Naive thymus-derived CD4-positive, alpha-beta T cell (primary cell): ENCODE measurements at regions of chr14 and their contacts with region 1.

Region 1: DNA sequence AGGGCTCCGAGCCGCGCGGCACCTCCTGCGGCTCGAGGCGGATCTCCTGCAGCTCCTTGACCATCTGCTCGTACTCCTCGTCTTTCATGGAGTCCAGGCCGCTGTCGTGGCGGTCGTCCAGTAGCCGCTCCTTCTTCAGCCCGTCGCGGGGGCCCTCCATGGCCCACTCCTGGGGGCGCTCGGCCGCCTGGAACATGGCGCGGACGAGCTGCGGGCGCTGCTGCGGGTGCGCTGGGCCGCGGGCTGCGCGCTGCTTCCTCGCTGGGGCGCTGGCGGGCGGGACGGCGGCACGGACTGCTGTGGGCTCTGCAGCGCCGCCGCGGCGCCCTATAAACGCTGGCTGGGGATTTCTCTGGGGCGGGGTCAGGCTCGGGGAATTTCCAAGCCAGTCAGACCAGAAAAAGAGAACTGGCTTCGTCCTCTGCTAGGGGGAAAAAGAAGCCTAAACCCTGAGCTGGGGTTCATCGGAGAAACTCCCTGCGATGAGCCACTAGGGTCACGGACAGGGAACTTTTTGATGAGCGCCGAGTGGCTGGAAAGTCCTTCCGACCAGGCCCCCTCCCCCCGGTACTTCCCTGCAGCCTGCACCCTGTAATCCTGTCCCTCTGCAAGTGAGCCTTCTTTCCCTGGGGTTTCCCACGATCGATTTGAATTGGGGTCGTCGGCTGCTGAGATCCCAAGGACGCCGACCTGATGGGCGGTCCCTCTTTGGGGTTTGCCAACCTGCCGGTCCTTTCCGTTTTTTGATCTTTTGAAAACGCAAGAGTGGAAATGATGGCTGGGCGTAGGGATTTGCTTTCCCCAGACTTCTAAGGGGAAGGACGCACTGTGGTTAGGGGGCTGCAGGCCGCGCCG is at the start of gene NFKBIA:
- DNase-seq: peak; percentile 91 to 99 (median 93)
- ATAC-seq: peak; percentile 79
- H3K4me3 ChIP-seq: peak within 1 kb of the TSS; percentile 85
- H3K4me3 Mint-ChIP-seq: peak within 1 kb of the TSS; percentile 92 to 97 (median 94)
- H3K27ac ChIP-seq: peak within 1 kb of the TSS; percentile 96
- H3K27ac Mint-ChIP-seq: peak within 1 kb of the TSS; percentile 96 to 99 (median 98)
- H3K4me1 ChIP-seq: peaks cover 42 to 43% of the 10 kb centered on the region in 2 donors
- H3K4me1 Mint-ChIP-seq: peaks cover 28 to 63% (median 53%) of the 10 kb centered on the region in 7 donors
- H3K27me3 ChIP-seq: no peaks in the 10 kb centered on the region
- H3K27me3 Mint-ChIP-seq: peaks cover 0 to 2% (median 0%) of the 10 kb centered on the region in 5 donors
- total RNA-seq, gene NFKBIA: 144 to 1,533 (median 246) TPM

Region 2: DNA sequence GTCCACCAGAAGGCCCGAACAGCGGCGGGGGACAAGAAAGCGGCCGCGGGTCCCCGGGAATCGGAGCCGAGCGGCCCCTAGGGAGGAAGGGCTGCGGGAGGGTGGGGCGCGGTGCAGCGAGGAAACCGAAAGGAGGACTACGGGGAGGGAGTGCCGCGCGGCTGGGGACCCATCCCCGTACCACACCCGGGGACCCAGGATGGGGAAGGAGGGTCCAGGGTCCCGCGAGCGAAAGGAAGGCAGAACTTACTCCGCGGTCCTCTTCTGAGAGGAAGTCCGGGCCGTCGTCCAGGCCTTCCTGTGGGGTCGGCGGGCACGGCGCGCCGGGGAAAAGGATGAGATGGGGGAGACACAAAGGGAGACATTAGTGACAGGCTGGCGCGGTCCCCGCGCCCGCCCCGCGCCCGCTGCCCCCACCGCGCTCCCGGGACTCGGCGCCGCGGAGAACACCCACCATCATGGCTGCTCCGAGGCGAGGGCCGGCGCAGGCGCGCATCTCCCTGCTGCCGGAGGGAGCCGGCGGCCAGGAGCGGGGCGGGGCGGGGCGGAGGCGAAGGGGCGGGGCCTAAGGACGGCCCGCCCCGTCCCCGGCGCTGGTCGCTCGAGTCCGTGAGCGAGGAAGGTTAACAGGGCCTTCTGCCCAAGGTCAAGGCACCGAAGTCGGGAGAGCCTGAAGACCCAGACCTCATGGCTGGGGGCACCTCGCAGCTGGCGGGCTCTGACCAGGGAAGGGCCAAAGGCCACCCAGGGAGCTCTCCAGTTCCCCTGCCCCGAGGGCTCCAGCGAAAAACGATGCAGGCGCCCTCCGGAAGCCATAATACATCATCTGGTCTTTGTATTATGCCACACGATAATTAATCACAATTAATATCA is 774.8 kb before region 1 on chr14 and contains the start of gene SNX6:
- CTCF ChIA-PET with region 1: no interaction called
- POLR2A ChIA-PET with region 1: interaction called, 6 read pairs
- intact Hi-C with region 1: loop called (anchors 1 to 5 kb)
- DNase-seq: peak; percentile 75 to 87 (median 83)
- ATAC-seq: peak; percentile 100
- H3K4me3 ChIP-seq: peak within 1 kb of the TSS; percentile 72
- H3K4me3 Mint-ChIP-seq: peak within 1 kb of the TSS; percentile 89 to 100 (median 98)
- H3K27ac ChIP-seq: peak within 1 kb of the TSS; percentile 98
- H3K27ac Mint-ChIP-seq: peak within 1 kb of the TSS; percentile 92 to 97 (median 96)
- H3K4me1 ChIP-seq: peaks cover 17 to 20% of the 10 kb centered on the region in 2 donors
- H3K4me1 Mint-ChIP-seq: peaks cover 6 to 49% (median 33%) of the 10 kb centered on the region in 7 donors
- H3K27me3 ChIP-seq: no peaks in the 10 kb centered on the region
- H3K27me3 Mint-ChIP-seq: peaks cover 0 to 18% (median 0%) of the 10 kb centered on the region in 5 donors
- total RNA-seq, gene SNX6: 56.6 to 78.9 (median 59.7) TPM

Region 3: DNA sequence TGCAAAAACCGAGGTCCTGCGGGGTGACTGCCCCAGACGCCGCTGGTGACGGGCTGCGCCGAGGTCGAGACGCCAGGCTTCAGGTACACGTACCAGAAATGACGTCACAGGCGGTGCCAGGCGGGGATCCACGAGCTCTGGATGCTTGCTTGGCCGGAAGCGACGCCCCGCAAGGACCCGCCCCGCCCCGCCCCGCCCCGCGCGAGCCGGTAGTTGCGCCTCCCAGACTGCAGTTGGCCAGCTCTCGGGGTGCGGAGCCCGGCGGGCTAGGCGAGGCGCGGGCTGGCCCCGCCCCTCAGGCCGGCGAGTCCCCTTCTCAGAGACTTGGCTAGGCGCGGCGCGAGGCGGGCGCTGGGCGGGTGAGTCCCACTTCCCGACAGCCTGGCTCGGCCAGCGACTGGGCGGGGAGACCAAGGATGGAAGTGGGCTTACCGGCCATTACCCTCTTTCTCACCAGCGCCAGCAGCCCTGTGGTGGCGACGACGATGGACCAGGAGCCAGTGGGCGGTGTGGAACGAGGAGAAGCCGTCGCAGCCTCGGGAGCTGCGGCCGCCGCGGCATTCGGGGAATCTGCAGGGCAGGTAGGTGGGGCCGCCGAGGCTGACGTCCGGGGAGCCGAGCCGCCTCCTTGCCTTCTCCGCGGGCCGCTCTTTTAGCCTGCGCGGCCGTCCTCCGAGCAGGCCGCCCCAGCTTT is 358.5 kb before region 1 on chr14 and contains the start of gene FAM177A1:
- CTCF ChIA-PET with region 1: no interaction called
- POLR2A ChIA-PET with region 1: interaction called, 29 read pairs
- intact Hi-C with region 1: loop called (anchors 1 kb)
- DNase-seq: peak; percentile 89 to 100 (median 98)
- ATAC-seq: peak; percentile 94
- H3K4me3 ChIP-seq: peak within 1 kb of the TSS; percentile 80
- H3K4me3 Mint-ChIP-seq: peak within 1 kb of the TSS; percentile 88 to 99 (median 93)
- H3K27ac ChIP-seq: peak within 1 kb of the TSS; percentile 99
- H3K27ac Mint-ChIP-seq: peak within 1 kb of the TSS; percentile 96 to 100 (median 99)
- H3K4me1 ChIP-seq: peaks cover 11 to 19% of the 10 kb centered on the region in 2 donors
- H3K4me1 Mint-ChIP-seq: peaks cover 13 to 39% (median 34%) of the 10 kb centered on the region in 7 donors
- H3K27me3 ChIP-seq: no peaks in the 10 kb centered on the region
- H3K27me3 Mint-ChIP-seq: no peaks in the 10 kb centered on the region
- total RNA-seq, gene FAM177A1: 34.3 to 135 (median 41.7) TPM

Region 4: GRCh38 chr14:35229495-35230089 is 175.1 kb before region 1 on chr14:
- CTCF ChIA-PET with region 1: interaction called, 22 read pairs
- POLR2A ChIA-PET with region 1: interaction called, 35 read pairs
- intact Hi-C with region 1: loop called (anchors 1 kb)
- DNase-seq: peak in 6 of 9 donors; percentile 3 to 41 (median 30)
- ATAC-seq: peak; percentile 61
- H3K4me3 ChIP-seq: no peak overlapping the region
- H3K4me3 Mint-ChIP-seq: no peak overlapping the region
- H3K27ac ChIP-seq: no peak overlapping the region
- H3K27ac Mint-ChIP-seq: peak overlapping the region in 1 of 9 donors; percentile 72
- H3K4me1 ChIP-seq: no peaks in the 10 kb centered on the region
- H3K4me1 Mint-ChIP-seq: peaks cover 6 to 27% (median 16%) of the 10 kb centered on the region in 7 donors
- H3K27me3 ChIP-seq: no peaks in the 10 kb centered on the region
- H3K27me3 Mint-ChIP-seq: no peaks in the 10 kb centered on the region

Region 5: GRCh38 chr14:35301735-35302528 is 102.7 kb before region 1 on chr14:
- CTCF ChIA-PET with region 1: interaction called, 5 read pairs
- POLR2A ChIA-PET with region 1: interaction called, 16 read pairs
- intact Hi-C with region 1: no loop called
- DNase-seq: no peak
- ATAC-seq: no peak
- H3K4me3 ChIP-seq: no peak overlapping the region
- H3K4me3 Mint-ChIP-seq: peak overlapping the region; percentile 35 to 66 (median 48)
- H3K27ac ChIP-seq: peak overlapping the region; percentile 33
- H3K27ac Mint-ChIP-seq: peak overlapping the region; percentile 32 to 86 (median 72)
- H3K4me1 ChIP-seq: peaks cover 26 to 32% of the 10 kb centered on the region in 2 donors
- H3K4me1 Mint-ChIP-seq: peaks cover 51 to 66% (median 52%) of the 10 kb centered on the region in 7 donors
- H3K27me3 ChIP-seq: no peaks in the 10 kb centered on the region
- H3K27me3 Mint-ChIP-seq: no peaks in the 10 kb centered on the region

Region 6: DNA sequence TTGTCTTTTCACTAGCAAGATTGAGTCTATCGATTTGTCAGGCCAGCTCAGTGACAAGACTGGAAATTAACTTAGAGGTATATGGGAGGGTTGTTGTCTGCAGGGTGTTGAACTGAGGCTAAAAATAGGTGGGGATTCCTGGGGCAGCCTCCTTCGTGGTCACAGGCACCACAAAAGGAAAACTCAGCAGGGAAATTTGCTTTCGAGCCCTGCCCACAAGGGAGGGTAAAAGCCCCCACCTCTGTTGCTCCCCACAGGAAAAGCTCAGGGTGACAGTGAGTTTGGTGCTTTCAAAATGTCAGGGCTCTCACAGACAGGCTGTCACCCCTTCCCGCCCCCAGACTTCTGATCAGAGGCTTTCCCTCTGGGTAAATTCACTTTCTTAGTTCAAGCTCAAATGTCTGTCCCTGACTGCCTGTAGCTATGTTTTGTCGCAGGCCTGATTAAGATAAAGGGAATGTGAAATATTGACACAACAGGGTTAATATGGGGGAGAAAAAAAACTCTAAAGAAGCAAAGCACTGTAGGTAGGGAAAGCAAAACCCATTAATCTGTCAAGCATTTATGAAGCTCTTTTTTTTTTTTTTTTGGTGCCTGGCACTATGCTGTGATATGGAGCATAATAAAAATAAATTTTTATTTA is 11.6 kb after region 1 on chr14:
- CTCF ChIA-PET with region 1: interaction called, 47 read pairs
- POLR2A ChIA-PET with region 1: interaction called, 103 read pairs
- intact Hi-C with region 1: loop called (anchors 1 kb)
- DNase-seq: peak in 6 of 9 donors; percentile 18 to 80 (median 30)
- ATAC-seq: peak; percentile 67
- H3K4me3 ChIP-seq: no peak overlapping the region
- H3K4me3 Mint-ChIP-seq: peak overlapping the region; percentile 46 to 81 (median 72)
- H3K27ac ChIP-seq: peak overlapping the region; percentile 73
- H3K27ac Mint-ChIP-seq: peak overlapping the region; percentile 76 to 95 (median 92)
- H3K4me1 ChIP-seq: peaks cover 31 to 32% of the 10 kb centered on the region in 2 donors
- H3K4me1 Mint-ChIP-seq: peaks cover 29 to 48% (median 45%) of the 10 kb centered on the region in 7 donors
- H3K27me3 ChIP-seq: no peaks in the 10 kb centered on the region
- H3K27me3 Mint-ChIP-seq: peaks cover 0 to 7% (median 0%) of the 10 kb centered on the region in 5 donors